Mammary epithelial cell (primary cell): ENCODE measurements at regions of chr1 and their contacts with region 1.

Region 1: GRCh38 chr1:60483509-60483908 is 409.9 kb upstream of the C1orf87 start:
- DNase-seq: no peak
- H3K4me3 ChIP-seq: no peak overlapping the region
- H3K27ac ChIP-seq: no peak overlapping the region
- H3K4me1 ChIP-seq: no peaks in the 10 kb centered on the region
- H3K27me3 ChIP-seq: no peaks in the 10 kb centered on the region
- CTCF ChIP-seq: no peak

Region 2: GRCh38 chr1:60413091-60413490 is 70.4 kb before region 1 on chr1:
- CTCF ChIA-PET with region 1: no interaction called
- dilution Hi-C with region 1: no loop called
- in situ Hi-C with region 1: no loop called
- intact Hi-C with region 1: no loop called
- DNase-seq: no peak
- H3K4me3 ChIP-seq: no peak overlapping the region
- H3K27ac ChIP-seq: no peak overlapping the region
- H3K4me1 ChIP-seq: no peaks in the 10 kb centered on the region
- H3K27me3 ChIP-seq: peaks cover 3% of the 10 kb centered on the region
- CTCF ChIP-seq: no peak

Region 3: GRCh38 chr1:60535713-60536112 is 52.2 kb after region 1 on chr1:
- CTCF ChIA-PET with region 1: no interaction called
- dilution Hi-C with region 1: loop called (anchors 5 kb)
- in situ Hi-C with region 1: no loop called
- intact Hi-C with region 1: no loop called
- DNase-seq: no peak
- H3K4me3 ChIP-seq: no peak overlapping the region
- H3K27ac ChIP-seq: no peak overlapping the region
- H3K4me1 ChIP-seq: no peaks in the 10 kb centered on the region
- H3K27me3 ChIP-seq: peaks cover 2% of the 10 kb centered on the region
- CTCF ChIP-seq: no peak